Gastrocnemius medialis (tissue), 4 donors: ENCODE measurements at regions of chr1 and their contacts with region 1.

Region 1: DNA sequence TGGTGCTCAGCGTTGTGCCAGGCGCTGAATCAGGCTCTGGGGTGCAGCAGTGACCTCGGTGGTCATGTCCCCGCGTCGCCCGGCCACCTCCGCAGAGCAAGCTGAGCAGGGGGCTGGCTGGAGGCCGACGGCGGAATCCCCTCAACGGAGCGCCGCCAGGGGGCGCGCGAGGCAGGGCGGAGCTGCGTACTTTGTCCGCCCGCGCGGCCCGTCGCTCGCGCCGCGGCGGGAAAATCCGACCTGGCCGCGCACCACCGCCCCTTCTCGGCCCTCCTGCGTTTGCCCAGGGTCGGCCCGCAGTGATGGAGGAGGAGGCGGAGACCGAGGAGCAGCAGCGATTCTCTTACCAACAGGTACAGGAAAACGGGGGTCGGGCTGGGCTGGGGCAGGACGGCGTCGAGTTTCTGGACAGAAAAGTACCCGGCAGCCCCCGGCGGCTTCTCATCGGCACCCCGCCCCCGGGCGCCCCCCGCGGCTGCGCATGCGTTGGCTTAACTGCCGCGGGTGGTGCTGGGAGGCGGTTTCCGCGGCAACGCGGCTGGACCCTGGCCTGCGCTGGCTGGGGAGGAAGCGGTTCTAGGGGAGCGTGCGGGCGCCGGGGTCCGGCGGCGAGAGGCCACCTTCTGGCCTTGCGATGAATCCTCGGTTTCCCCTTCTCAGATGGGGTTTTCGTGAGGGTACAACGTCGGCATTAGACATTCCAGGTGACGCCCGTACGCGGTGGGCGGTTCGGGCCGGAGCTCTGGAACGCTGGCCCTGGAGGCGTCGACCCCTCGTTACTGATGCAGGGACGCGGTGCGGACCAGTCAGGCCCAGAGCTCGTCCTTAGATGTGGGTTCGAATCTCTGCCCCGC is at the start of gene CENPS:
- DNase-seq: peak; percentile 68 to 79
- ATAC-seq: peak; percentile 92 to 93
- H3K4me3 ChIP-seq: peak within 1 kb of the TSS; percentile 69 to 90 (median 85)
- H3K27ac ChIP-seq: peak within 1 kb of the TSS; percentile 25 to 77 (median 68)
- H3K4me1 ChIP-seq: peaks cover 8 to 14% of the 10 kb centered on the region in 2 donors
- H3K27me3 ChIP-seq: no peaks in the 10 kb centered on the region
- CTCF ChIP-seq: peak; percentile 89 to 100 (median 98)
- POLR2A ChIP-seq: peak in 1 of 2 donors; percentile 20
- total RNA-seq, gene CENPS: 0.42 to 3.8 (median 2.9) TPM

Region 2: DNA sequence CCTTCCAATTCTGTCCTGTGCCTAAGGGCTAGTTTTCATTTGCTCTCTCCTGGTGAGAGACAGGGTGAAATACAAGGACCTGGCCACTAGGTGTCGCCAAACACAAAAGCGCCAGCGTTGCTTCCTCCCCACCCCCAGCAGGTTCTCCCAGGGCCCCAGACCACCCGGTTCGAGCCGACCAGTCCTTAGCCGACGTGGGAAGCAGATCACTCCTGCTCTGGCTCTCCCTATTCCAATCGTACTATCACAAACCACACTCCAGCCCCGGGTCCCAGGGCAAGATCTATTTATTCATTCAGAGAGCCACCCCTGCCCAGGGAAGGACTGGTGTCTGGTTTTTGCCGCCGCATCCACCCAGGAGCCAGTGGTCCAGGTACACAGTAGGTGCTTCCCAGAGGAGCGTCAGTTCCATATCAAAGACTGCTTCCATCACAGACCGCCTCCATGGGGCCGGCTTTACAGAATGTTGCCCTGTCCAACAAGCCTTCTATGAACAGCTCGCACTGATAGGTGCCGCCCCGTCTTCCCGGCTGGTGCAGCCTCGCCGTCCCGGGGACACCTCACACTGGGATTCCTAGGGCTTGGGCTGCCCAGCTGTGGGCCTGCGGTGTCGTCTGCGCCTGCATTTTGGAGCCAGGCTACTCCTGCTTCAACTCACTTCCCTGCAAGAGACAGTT is 555.3 kb before region 1 on chr1:
- in situ Hi-C with region 1: no loop called
- intact Hi-C with region 1: loop called (anchors 1 kb)
- DNase-seq: peak; percentile 36 to 65
- ATAC-seq: peak; percentile 77 to 79
- H3K4me3 ChIP-seq: peak overlapping the region in 1 of 4 donors; percentile 9
- H3K27ac ChIP-seq: peak overlapping the region in 2 of 4 donors; percentile 18 to 35
- H3K4me1 ChIP-seq: peaks cover 16 to 33% of the 10 kb centered on the region in 2 donors
- H3K27me3 ChIP-seq: no peaks in the 10 kb centered on the region
- CTCF ChIP-seq: peak; percentile 89 to 98 (median 91)
- POLR2A ChIP-seq: no peak

Region 3: GRCh38 chr1:10378081-10378841 is 52.2 kb before region 1 on chr1:
- in situ Hi-C with region 1: loop called in 2 of 4 experiments (anchors 10 kb)
- intact Hi-C with region 1: loop called (anchors 2 kb)
- DNase-seq: no peak
- ATAC-seq: no peak
- H3K4me3 ChIP-seq: no peak overlapping the region
- H3K27ac ChIP-seq: no peak overlapping the region
- H3K4me1 ChIP-seq: no peaks in the 10 kb centered on the region
- H3K27me3 ChIP-seq: no peaks in the 10 kb centered on the region
- CTCF ChIP-seq: no peak
- POLR2A ChIP-seq: no peak

Region 4: DNA sequence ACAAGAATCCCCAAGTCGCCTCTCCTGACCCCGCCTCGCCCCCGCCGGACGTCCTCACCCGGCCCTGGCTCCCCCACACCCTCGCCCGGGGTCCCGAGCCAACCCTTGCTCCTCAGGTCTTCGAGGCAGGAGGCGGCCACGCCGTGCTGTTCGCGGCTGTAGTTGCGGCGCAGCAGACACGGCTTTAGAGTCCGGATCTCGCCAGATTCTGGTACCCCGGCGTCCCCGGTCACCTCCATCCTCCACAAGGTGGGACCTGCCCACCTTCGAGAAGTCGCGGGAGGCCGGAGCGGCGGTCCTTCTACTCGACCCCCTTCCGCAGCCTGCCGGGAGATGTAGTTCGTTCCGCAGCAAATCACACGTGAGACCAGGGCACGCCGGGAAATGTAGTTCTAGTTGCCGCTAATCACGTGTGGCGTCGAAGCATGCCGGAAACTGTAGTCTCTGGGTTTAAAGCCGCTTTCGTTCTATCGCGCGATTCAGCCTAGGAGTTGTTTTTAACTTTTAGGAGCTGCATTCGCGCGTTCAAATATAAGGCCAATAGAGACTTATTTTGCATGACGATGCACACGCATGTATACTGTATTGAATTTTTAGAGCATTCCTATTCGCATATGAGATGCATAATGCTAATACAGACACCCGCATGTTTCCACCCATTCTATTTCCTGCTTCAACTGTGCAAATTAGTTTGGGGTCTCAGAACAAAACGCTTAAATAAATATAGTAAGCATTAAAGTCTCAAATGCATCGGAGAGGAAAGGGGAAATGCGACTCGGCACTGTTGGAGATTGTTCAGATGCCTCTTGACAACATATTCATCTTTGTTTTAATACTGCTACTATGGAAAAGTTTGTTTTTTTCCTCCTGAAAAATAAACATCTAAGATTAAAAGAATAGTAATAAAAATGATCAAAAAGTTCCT is 42.0 kb after region 1 on chr1 and contains the start of gene DFFA:
- in situ Hi-C with region 1: no loop called
- intact Hi-C with region 1: loop called (anchors 2 kb)
- DNase-seq: peak; percentile 91 to 92
- ATAC-seq: peak; percentile 95
- H3K4me3 ChIP-seq: peak within 1 kb of the TSS; percentile 75 to 96 (median 87)
- H3K27ac ChIP-seq: peak within 1 kb of the TSS; percentile 65 to 84 (median 78)
- H3K4me1 ChIP-seq: peaks cover 30 to 31% of the 10 kb centered on the region in 2 donors
- H3K27me3 ChIP-seq: no peaks in the 10 kb centered on the region
- CTCF ChIP-seq: no peak
- POLR2A ChIP-seq: peak; percentile 61 to 62
- total RNA-seq, gene DFFA: 13.8 to 15.6 (median 14.5) TPM